Esophagus squamous epithelium (tissue), 5 donors: ENCODE measurements at regions of chr2 and their contacts with region 1.

Region 1: DNA sequence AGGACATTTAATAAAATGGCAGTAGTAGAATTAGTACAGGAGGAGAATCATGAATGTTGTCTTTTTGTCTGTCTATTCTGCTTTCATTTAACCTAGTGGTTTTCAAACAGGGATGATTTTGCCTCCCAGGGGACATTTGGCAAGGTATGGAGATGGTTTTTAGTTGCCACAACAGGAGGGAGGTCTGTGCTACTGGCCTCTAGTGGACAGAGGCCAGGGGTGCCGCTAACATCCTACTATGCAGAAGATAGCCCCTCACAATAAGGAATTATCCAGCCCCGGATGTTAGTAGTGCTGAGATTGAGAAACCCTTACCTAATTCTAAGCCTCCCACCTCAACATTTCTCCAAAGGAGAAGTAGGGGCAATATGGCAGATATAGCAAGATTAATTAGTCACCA is 18.3 kb downstream of the FASTKD2 start:
- DNase-seq: no peak
- H3K4me3 ChIP-seq: no peak overlapping the region
- H3K27ac ChIP-seq: no peak overlapping the region
- H3K4me1 ChIP-seq: no peaks in the 10 kb centered on the region
- H3K27me3 ChIP-seq: no peaks in the 10 kb centered on the region
- CTCF ChIP-seq: peak in 1 of 6 experiments; percentile 26
- POLR2A ChIP-seq: no peak

Region 2: GRCh38 chr2:206573793-206574192 is 209.9 kb before region 1 on chr2:
- intact Hi-C with region 1: no loop called
- DNase-seq: no peak
- H3K4me3 ChIP-seq: no peak overlapping the region
- H3K27ac ChIP-seq: no peak overlapping the region
- H3K4me1 ChIP-seq: no peaks in the 10 kb centered on the region
- H3K27me3 ChIP-seq: no peaks in the 10 kb centered on the region
- CTCF ChIP-seq: no peak
- POLR2A ChIP-seq: no peak

Region 3: GRCh38 chr2:206693399-206694137 is 90.2 kb before region 1 on chr2:
- intact Hi-C with region 1: loop called (anchors 10 kb)
- DNase-seq: no peak
- H3K4me3 ChIP-seq: no peak overlapping the region
- H3K27ac ChIP-seq: no peak overlapping the region
- H3K4me1 ChIP-seq: no peaks in the 10 kb centered on the region
- H3K27me3 ChIP-seq: no peaks in the 10 kb centered on the region
- CTCF ChIP-seq: peak; percentile 48 to 72 (median 57)
- POLR2A ChIP-seq: no peak